Endothelial cell of umbilical vein (primary cell): ENCODE measurements at regions of chr10 and their contacts with region 1.

Region 1: DNA sequence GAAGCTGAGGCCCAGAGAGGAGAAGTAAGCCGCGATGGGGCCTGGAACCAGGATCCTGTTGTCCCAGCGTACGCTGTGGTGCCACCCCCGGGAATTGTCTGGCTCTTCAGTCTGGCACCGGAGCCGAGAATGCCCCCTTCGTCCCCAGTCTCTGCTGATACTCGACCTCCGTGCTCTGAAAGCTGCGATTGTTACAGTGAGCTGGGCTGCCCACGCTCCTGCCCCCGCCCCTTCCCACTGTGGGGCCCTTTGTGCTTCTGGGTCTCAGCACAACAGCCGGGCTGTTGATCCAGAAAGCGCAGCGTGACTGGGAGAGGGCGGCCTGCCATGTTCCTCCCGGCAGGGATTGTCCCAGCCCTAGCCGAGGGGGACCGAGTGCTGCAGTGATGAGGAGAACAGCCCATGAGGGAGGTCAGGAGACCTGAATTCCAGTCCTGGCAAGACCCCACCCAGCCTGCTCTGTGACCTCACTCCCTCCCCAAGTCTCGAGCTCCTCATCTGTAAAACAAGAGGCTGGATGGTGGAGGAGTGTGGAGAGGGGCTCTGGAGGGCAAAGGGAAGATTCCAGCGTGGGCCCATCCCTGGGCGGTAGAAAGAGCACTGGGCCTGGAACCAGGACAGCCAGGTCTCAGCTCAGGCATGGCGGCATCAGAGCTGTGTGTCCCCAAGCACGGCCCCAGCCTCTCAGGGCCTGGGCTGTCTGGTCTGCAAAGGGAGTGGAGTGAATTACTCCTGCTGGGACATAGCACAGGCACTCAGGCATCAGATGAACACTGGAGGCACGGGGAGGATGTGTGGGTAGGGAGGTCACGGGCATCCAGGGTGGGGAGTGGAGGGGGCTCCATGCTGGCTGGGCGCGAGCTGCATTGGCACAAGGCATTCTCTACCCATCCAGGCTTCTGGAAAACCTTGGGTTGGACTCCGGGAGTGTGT is 43.6 kb downstream of the TSPAN15 start:
- DNase-seq: no peak
- H3K4me3 ChIP-seq: no peak overlapping the region
- H3K27ac ChIP-seq: no peak overlapping the region
- H3K4me1 ChIP-seq: peaks cover 12% of the 10 kb centered on the region
- H3K27me3 ChIP-seq: no peaks in the 10 kb centered on the region
- CTCF ChIP-seq: no peak
- POLR2A ChIP-seq: no peak

Region 2: DNA sequence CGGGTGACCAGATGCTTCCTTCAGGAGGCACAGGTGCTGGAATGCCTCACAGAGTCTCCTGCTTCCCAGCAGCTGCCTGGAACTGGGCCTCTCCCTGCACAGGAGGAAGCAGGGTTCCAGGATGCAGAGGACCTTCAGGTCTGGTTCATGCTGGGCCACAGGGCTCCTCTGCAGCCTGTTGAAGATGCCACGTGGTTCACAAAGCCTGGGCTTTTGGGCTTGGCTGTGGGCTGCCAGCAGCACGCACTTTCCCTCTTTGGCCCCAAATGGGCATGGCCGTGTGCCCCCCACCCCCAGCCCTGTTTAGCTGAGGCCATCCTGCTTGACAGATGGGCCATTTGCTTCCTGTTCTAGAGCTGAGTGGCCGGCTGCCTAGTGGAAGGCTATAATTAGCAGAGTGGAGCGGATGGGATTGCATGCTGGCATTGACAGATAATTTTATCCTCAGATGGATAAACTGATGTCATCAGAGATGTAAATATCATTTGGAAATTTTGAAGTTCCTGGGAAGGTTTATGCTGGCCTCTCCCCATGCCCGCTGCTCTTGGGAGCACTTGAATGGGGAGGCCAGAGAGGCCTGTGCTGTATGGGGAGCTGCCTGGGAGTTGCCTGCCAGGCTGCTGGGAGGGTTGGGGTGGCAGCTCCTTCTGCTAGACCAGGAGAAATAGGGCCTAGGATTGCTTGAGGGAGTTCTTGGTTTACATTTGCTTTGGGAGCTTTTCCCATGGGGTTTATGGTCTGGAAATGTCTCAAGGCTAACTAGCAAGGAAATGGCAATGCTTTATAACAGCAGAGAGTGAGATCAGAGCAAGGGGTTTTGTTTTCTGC is 15.4 kb before region 1 on chr10:
- CTCF ChIA-PET with region 1: interaction called, 14 read pairs
- POLR2A ChIA-PET with region 1: no interaction called
- dilution Hi-C with region 1: no loop called
- intact Hi-C with region 1: loop called (anchors 2 kb)
- DNase-seq: peak; percentile 57
- H3K4me3 ChIP-seq: no peak overlapping the region
- H3K27ac ChIP-seq: peak overlapping the region; percentile 47
- H3K4me1 ChIP-seq: peaks cover 52% of the 10 kb centered on the region
- H3K27me3 ChIP-seq: no peaks in the 10 kb centered on the region
- CTCF ChIP-seq: no peak
- POLR2A ChIP-seq: no peak